Gastrocnemius medialis (tissue), 4 donors: ENCODE measurements at regions of chr15 and their contacts with region 1.

Region 1: GRCh38 chr15:75823860-75824613 is 19.2 kb upstream of the UBE2Q2 start:
- DNase-seq: no peak
- ATAC-seq: no peak
- H3K4me3 ChIP-seq: no peak overlapping the region
- H3K27ac ChIP-seq: no peak overlapping the region
- H3K4me1 ChIP-seq: no peaks in the 10 kb centered on the region
- H3K27me3 ChIP-seq: no peaks in the 10 kb centered on the region
- CTCF ChIP-seq: no peak
- POLR2A ChIP-seq: no peak

Region 2: GRCh38 chr15:75884041-75884440 is 60.0 kb after region 1 on chr15:
- in situ Hi-C with region 1: no loop called
- intact Hi-C with region 1: loop called (anchors 10 kb)
- DNase-seq: no peak
- ATAC-seq: no peak
- H3K4me3 ChIP-seq: no peak overlapping the region
- H3K27ac ChIP-seq: no peak overlapping the region
- H3K4me1 ChIP-seq: no peaks in the 10 kb centered on the region
- H3K27me3 ChIP-seq: no peaks in the 10 kb centered on the region
- CTCF ChIP-seq: no peak
- POLR2A ChIP-seq: no peak